ENCODE measurements at regions of chr9 and their contacts with region 1.

Region 1: GRCh38 chr9:38371495-38371894 is 21.0 kb upstream of the ALDH1B1 start:
- DNase-seq: peak; percentile 76
- ATAC-seq: peak; percentile 92
- H3K4me3 ChIP-seq: no peak overlapping the region
- H3K27ac ChIP-seq: no peak overlapping the region
- H3K4me1 ChIP-seq: peaks cover 39% of the 10 kb centered on the region
- H3K27me3 ChIP-seq: no peaks in the 10 kb centered on the region
- CTCF ChIP-seq: peak; percentile 92
- EP300 ChIP-seq: no peak
- POLR2A ChIP-seq: no peak
- RAD21 ChIP-seq: peak; percentile 92

Region 2: GRCh38 chr9:38294220-38294960 is 77.1 kb before region 1 on chr9:
- CTCF ChIA-PET with region 1: no interaction called
- POLR2A ChIA-PET with region 1: no interaction called
- in situ Hi-C with region 1: no loop called
- intact Hi-C with region 1: no loop called
- DNase-seq: no peak
- ATAC-seq: no peak
- H3K4me3 ChIP-seq: no peak overlapping the region
- H3K27ac ChIP-seq: no peak overlapping the region
- H3K4me1 ChIP-seq: no peaks in the 10 kb centered on the region
- H3K27me3 ChIP-seq: peaks cover 0 to 13% of the 10 kb centered on the region in 2 experiments; a peak in 2 of 5 replicates
- CTCF ChIP-seq: no peak
- EP300 ChIP-seq: no peak
- POLR2A ChIP-seq: no peak
- RAD21 ChIP-seq: no peak

Region 3: DNA sequence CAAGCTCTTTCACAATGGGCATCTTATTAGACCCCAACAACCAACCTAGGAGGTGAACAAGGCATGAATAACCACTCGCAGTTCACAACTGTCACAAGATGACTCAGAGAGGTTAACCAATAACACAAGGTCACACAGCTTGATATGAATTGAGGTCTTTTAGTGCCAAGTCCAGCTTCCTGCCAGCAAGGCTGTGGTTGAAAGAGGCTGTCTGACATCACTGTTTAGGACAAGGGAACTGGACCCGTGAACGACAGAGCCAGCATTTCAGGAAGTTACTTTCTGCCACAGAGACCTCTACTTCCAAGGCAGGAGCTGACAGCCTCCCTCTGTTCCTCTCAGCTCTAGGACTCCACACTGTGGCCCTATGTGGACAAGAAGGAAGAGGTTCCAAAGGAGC is 32.4 kb before region 1 on chr9:
- CTCF ChIA-PET with region 1: no interaction called
- POLR2A ChIA-PET with region 1: no interaction called
- in situ Hi-C with region 1: no loop called
- intact Hi-C with region 1: no loop called
- DNase-seq: no peak
- ATAC-seq: no peak
- H3K4me3 ChIP-seq: no peak overlapping the region
- H3K27ac ChIP-seq: no peak overlapping the region
- H3K4me1 ChIP-seq: peaks cover 11% of the 10 kb centered on the region; the same call in 1 of the 2 replicates
- H3K27me3 ChIP-seq: peaks cover 4 to 21% of the 10 kb centered on the region in 2 experiments; a peak in 3 of 5 replicates
- CTCF ChIP-seq: no peak
- EP300 ChIP-seq: no peak
- POLR2A ChIP-seq: no peak
- RAD21 ChIP-seq: no peak

Region 4: GRCh38 chr9:38392235-38393127 is 21.0 kb after region 1 on chr9 and contains the start of gene ALDH1B1:
- CTCF ChIA-PET with region 1: interaction called, 7 read pairs
- POLR2A ChIA-PET with region 1: interaction called, 8 read pairs
- in situ Hi-C with region 1: no loop called
- intact Hi-C with region 1: loop called (anchors 2 kb)
- DNase-seq: peak; percentile 77
- ATAC-seq: peak; percentile 98
- H3K4me3 ChIP-seq: peak within 1 kb of the TSS; percentile 65 to 88 (median 77)
- H3K27ac ChIP-seq: peak within 1 kb of the TSS; percentile 79
- H3K4me1 ChIP-seq: peaks cover 69% of the 10 kb centered on the region
- H3K27me3 ChIP-seq: no peaks in the 10 kb centered on the region; a peak in 1 of 5 replicates
- CTCF ChIP-seq: peak; percentile 67
- EP300 ChIP-seq: no peak
- POLR2A ChIP-seq: peak; percentile 90
- RAD21 ChIP-seq: no peak
- total RNA-seq, gene ALDH1B1: 125 and 159 TPM in 2 replicates

Region 5: GRCh38 chr9:38405785-38406184 is 34.3 kb after region 1 on chr9:
- CTCF ChIA-PET with region 1: interaction called, 90 read pairs
- POLR2A ChIA-PET with region 1: no interaction called
- in situ Hi-C with region 1: no loop called
- intact Hi-C with region 1: loop called (anchors 1 kb)
- DNase-seq: no peak
- ATAC-seq: no peak
- H3K4me3 ChIP-seq: no peak overlapping the region
- H3K27ac ChIP-seq: no peak overlapping the region
- H3K4me1 ChIP-seq: peaks cover 14% of the 10 kb centered on the region
- H3K27me3 ChIP-seq: peaks cover 8 to 34% of the 10 kb centered on the region in 2 experiments; a peak in 4 of 5 replicates
- CTCF ChIP-seq: no peak
- EP300 ChIP-seq: no peak
- POLR2A ChIP-seq: no peak
- RAD21 ChIP-seq: no peak

Region 6: DNA sequence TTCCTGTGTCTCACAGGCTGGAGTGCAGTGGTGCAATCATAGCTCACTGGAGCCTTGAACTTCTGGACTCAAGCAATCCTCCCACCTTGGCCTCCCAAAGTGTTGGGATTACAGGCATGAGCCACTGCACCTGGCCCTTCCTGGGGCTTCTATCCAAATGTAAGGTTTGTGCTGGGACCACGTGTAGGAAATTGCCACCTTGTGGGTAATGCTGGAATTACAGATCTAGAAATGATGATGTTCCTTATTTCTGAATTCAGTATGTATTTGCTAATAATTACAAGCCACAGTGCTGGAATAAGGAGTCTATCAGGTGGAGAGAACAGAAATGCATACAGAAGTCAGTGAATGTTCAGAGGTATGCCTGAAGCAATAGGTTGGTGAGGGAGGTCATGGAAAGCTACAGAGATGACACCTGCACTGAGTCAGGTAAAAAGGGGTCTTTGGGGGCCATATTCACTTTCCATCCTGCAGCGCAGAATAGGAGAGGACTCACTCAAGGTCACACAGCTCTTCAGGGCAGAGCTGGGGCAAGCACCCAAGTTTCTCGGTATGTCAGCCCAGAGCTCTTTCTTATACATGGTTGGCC is 61.5 kb after region 1 on chr9:
- CTCF ChIA-PET with region 1: interaction called, 14 read pairs
- POLR2A ChIA-PET with region 1: interaction called, 6 read pairs
- in situ Hi-C with region 1: no loop called
- intact Hi-C with region 1: loop called (anchors 1 kb)
- DNase-seq: peak; percentile 43
- ATAC-seq: peak; percentile 14; the same call in 1 of the 3 replicates
- H3K4me3 ChIP-seq: no peak overlapping the region
- H3K27ac ChIP-seq: no peak overlapping the region
- H3K4me1 ChIP-seq: peaks cover 58% of the 10 kb centered on the region
- H3K27me3 ChIP-seq: peaks cover 0 to 9% of the 10 kb centered on the region in 2 experiments; a peak in 2 of 5 replicates
- CTCF ChIP-seq: peak; percentile 63
- EP300 ChIP-seq: no peak
- POLR2A ChIP-seq: no peak
- RAD21 ChIP-seq: 0 out of 2 replicates have a peak, but pooled peaks have one; percentile 19

Measured in HepG2 (cell line).